SK-N-SH (cell line): ENCODE measurements at regions of chr14 and their contacts with region 1.

Region 1: GRCh38 chr14:89936658-89937185 is 17.8 kb downstream of the EFCAB11 start:
- DNase-seq: no peak
- H3K4me3 ChIP-seq: no peak overlapping the region
- H3K27ac ChIP-seq: no peak overlapping the region
- H3K4me1 ChIP-seq: no peaks in the 10 kb centered on the region
- H3K27me3 ChIP-seq: no peaks in the 10 kb centered on the region
- CTCF ChIP-seq: peak; percentile 27
- EP300 ChIP-seq: no peak
- RAD21 ChIP-seq: peak; percentile 16; the same call in 1 of the 2 replicates

Region 2: DNA sequence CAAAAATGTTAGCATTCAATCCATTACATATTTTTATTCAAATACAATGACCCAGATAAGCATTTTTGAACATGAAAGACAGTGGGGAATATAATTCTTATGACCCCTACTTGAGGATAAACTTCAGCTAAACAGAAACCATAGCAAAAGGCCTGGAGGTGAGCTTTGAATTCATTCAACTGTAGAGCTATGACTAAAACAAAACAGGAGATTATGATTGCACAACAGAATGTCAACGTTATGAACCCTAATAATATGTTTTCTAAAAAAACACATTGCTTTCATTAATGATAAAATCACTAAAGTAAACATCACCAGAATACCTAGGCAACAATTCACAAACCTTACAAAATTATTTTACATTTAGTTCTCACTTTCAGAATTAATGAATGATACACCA is 10.0 kb before region 1 on chr14:
- CTCF ChIA-PET with region 1: interaction called, 14 read pairs
- POLR2A ChIA-PET with region 1: no interaction called
- DNase-seq: no peak
- H3K4me3 ChIP-seq: no peak overlapping the region
- H3K27ac ChIP-seq: peak overlapping the region in 1 of 2 experiments; percentile 44; a peak in 1 of 4 replicates
- H3K4me1 ChIP-seq: peaks cover 0 to 6% of the 10 kb centered on the region in 2 experiments; a peak in 2 of 4 replicates
- H3K27me3 ChIP-seq: no peaks in the 10 kb centered on the region
- CTCF ChIP-seq: no peak
- EP300 ChIP-seq: no peak
- RAD21 ChIP-seq: no peak

Region 3: GRCh38 chr14:89954070-89955028 is 17.6 kb after region 1 on chr14 and contains the start of gene EFCAB11:
- CTCF ChIA-PET with region 1: interaction called, 14 read pairs
- POLR2A ChIA-PET with region 1: no interaction called
- DNase-seq: peak; percentile 92
- H3K4me3 ChIP-seq: peak within 1 kb of the TSS; percentile 76 to 89
- H3K27ac ChIP-seq: peak within 1 kb of the TSS; percentile 85 to 94
- H3K4me1 ChIP-seq: peaks cover 10 to 11% of the 10 kb centered on the region in 2 experiments; a peak in 3 of 4 replicates
- H3K27me3 ChIP-seq: no peaks in the 10 kb centered on the region
- CTCF ChIP-seq: peak; percentile 47
- EP300 ChIP-seq: no peak
- RAD21 ChIP-seq: no peak
- polyA plus RNA-seq, gene EFCAB11: 2.9 and 3.9 TPM in 2 replicates